Sciatic nerve (tissue), 2 donors: ENCODE measurements at regions of chr4 and their contacts with region 1.

Region 1: GRCh38 chr4:7867701-7868435 is 71.8 kb downstream of the AFAP1 start:
- DNase-seq: no peak
- ATAC-seq: no peak

Region 2: DNA sequence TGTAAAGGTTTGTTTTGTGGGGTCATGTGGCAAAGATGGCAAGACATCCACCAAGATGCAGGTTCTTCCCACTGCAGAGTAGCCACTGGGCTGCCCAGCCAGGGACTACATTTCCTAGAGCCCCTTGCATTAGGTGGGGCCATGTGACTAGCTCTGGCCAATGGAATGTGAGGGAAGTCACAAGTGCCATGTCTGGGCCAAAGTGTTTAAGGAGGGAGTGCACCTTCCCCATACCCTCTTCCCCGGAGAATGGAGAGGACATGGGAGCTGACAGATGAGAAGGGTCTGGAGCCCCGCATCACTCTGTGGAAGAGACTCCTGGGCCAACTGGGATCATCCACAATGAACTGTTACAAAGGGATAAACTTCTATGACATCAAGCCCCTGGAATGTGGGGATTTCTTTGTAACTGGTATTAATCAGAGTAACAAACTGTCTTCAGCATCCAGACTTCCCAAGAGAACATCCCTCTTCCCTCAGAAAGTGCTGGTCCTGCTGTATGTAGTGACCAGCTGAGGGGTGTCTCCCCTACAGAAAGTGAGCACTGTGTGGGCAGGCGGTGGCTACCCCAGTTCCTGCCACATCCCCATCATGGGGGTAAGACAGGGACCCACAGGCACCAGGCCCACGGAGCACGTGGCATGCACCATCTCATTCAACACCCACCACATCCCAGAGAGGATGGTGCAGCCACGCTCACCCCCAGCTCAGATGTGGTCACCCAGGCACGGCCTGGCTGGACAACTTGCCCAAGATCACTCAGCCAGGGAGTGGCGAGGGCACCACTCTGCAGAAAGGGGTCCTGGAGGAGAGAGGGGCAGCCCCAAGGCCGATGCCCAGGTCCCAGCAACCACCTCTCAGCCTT is 1406.3 kb before region 1 on chr4:
- intact Hi-C with region 1: no loop called
- DNase-seq: peak; percentile 26
- ATAC-seq: no peak

Region 3: GRCh38 chr4:7960790-7961655 is 93.2 kb after region 1 on chr4:
- intact Hi-C with region 1: no loop called
- DNase-seq: no peak
- ATAC-seq: no peak

Region 4: GRCh38 chr4:8000721-8001491 is 133.0 kb after region 1 on chr4:
- intact Hi-C with region 1: no loop called
- DNase-seq: no peak
- ATAC-seq: no peak

Region 5: GRCh38 chr4:8101213-8102075 is 233.6 kb after region 1 on chr4:
- intact Hi-C with region 1: loop called (anchors 5 kb)
- DNase-seq: peak; percentile 84
- ATAC-seq: peak; percentile 92